HCT116 (cell line): ENCODE measurements at regions of chr9 and their contacts with region 1.

Region 1: GRCh38 chr9:96232539-96233241 is 69.3 kb downstream of the HSD17B3 start:
- DNase-seq: no peak
- ATAC-seq: peak; percentile 97
- H3K4me3 ChIP-seq: no peak overlapping the region
- H3K27ac ChIP-seq: no peak overlapping the region
- H3K4me1 ChIP-seq: no peaks in the 10 kb centered on the region
- H3K27me3 ChIP-seq: 0 out of 2 replicates have a peak, but pooled peaks cover 4% of the 10 kb centered on the region
- CTCF ChIP-seq: peak; percentile 79 to 95 (median 93)
- POLR2A ChIP-seq: no peak
- RAD21 ChIP-seq: peak; percentile 85

Region 2: DNA sequence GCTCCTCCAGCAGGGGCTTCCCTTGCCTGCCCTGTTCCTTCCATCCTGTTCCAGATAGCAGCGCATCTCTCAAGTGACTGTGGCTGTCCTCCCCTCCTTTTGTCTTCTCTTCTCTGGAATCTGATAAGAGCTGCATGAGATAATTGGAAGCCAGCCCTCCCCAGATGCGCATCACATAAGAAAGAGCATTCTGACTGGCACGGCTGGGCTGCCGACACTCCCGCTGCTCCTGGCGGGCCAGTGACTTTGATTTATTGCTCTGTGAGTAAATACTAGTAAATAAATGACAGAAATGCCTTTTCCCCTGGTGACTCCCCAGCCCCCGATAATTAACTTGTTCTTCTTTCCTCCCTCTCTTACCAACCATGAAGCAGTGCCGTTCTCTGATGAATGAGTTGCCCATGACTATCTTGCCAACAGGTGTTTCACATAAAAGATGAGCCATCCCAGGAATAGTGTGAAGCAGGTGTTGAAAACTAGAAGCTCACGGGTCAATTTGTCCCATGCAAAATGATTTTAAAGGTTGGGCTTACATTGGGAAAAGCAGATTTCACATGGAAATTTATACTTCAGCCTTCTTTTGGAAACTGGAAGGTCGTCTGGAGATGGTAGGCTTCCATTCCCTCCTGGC is 144.9 kb before region 1 on chr9:
- CTCF ChIA-PET with region 1: no interaction called
- POLR2A ChIA-PET with region 1: no interaction called
- RAD21 ChIA-PET with region 1: no interaction called
- intact Hi-C with region 1: no loop called
- DNase-seq: no peak
- ATAC-seq: no peak
- H3K4me3 ChIP-seq: no peak overlapping the region
- H3K27ac ChIP-seq: no peak overlapping the region
- H3K4me1 ChIP-seq: peaks cover 7 to 10% of the 10 kb centered on the region in 2 experiments
- H3K27me3 ChIP-seq: no peaks in the 10 kb centered on the region; the same call in 1 of the 2 replicates
- CTCF ChIP-seq: no peak
- POLR2A ChIP-seq: no peak
- RAD21 ChIP-seq: no peak

Region 3: DNA sequence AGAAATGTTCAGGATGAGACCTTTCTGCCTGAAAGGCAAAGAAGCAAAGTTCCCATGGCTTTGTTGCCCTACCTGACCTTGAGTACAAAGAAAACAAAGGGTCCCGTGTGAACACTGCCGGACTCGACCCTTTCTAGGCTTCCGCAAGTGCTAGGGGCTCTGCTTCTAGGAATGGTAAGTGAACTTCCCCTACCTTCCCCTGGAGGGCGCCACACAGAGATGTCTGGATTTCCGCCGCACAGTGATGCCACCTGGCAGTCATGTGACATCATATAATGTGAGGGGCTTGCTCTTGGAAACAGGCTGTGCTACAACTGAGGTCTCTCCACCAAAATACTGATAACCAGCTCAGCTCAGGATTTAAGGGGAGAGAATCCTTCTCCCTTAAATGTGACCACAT is 12.7 kb after region 1 on chr9:
- CTCF ChIA-PET with region 1: interaction called, 13 read pairs
- POLR2A ChIA-PET with region 1: no interaction called
- RAD21 ChIA-PET with region 1: no interaction called
- intact Hi-C with region 1: no loop called
- DNase-seq: no peak
- ATAC-seq: peak; percentile 39
- H3K4me3 ChIP-seq: no peak overlapping the region
- H3K27ac ChIP-seq: no peak overlapping the region
- H3K4me1 ChIP-seq: peaks cover 17 to 25% of the 10 kb centered on the region in 2 experiments
- H3K27me3 ChIP-seq: no peaks in the 10 kb centered on the region
- CTCF ChIP-seq: peak; percentile 24 to 71 (median 71); a peak in 5 of 6 replicates
- POLR2A ChIP-seq: no peak
- RAD21 ChIP-seq: peak; percentile 31

Region 4: DNA sequence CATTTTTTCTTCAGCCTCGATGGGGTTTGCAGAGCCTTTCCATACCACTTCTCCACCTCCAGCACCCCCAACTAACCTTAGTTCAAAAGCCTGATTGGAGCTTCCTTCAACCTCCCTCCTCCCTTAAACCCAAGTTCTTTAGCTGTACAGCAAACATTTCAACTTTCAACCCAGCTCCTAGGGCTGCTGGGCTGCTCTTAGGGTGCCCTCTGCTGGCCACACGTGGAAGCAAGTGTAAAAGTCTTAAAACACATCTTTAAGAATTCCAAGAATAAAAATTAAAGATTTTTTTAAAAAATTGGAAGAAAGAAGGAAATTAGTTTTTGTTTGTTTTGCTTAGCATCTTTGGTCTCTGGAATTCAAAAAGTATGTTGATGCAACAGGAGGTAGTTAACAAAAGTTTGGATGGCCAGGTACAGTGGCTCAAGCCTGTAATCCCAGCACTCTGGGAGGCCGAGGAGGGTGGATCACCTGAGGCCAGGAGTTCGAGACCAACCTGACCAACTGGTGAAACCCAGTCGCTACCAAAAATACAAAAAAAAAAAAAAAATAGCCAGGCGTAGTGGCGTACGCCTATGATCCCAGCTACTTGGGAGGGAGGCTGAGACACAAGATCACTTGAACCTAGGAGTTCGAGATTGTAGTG is 84.8 kb after region 1 on chr9:
- CTCF ChIA-PET with region 1: interaction called, 15 read pairs
- POLR2A ChIA-PET with region 1: no interaction called
- RAD21 ChIA-PET with region 1: no interaction called
- intact Hi-C with region 1: loop called (anchors 1 kb)
- DNase-seq: peak; percentile 41
- ATAC-seq: peak; percentile 86
- H3K4me3 ChIP-seq: no peak overlapping the region
- H3K27ac ChIP-seq: no peak overlapping the region
- H3K4me1 ChIP-seq: no peaks in the 10 kb centered on the region
- H3K27me3 ChIP-seq: no peaks in the 10 kb centered on the region
- CTCF ChIP-seq: peak; percentile 90 to 95 (median 92)
- POLR2A ChIP-seq: no peak
- RAD21 ChIP-seq: peak; percentile 96

Region 5: DNA sequence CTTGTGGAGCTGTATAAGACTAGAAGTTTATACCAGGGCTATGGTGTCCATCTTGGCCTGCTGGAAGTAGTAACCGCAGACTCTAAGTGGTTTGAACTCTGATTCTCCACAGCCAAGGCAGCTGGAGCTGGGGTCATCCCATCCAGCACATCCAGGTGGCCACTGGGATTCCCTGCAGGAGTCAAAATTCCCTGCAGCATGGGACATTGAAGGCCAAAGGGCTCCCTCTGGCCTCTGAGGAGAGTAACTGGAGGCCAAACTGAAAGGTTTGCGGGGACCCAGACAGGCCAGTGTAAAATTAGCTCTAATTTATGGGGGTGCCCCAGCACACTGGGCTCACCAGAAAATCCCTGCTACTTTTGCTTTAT is 434.7 kb after region 1 on chr9:
- CTCF ChIA-PET with region 1: interaction called, 3 read pairs
- POLR2A ChIA-PET with region 1: no interaction called
- RAD21 ChIA-PET with region 1: interaction called in 1 of 2 experiments, 4 read pairs
- intact Hi-C with region 1: loop called (anchors 1 kb)
- DNase-seq: no peak
- ATAC-seq: peak; percentile 39
- H3K4me3 ChIP-seq: no peak overlapping the region
- H3K27ac ChIP-seq: no peak overlapping the region
- H3K4me1 ChIP-seq: peaks cover 0 to 3% of the 10 kb centered on the region in 2 experiments; a peak in 2 of 4 replicates
- H3K27me3 ChIP-seq: no peaks in the 10 kb centered on the region
- CTCF ChIP-seq: no peak
- POLR2A ChIP-seq: no peak
- RAD21 ChIP-seq: 0 out of 2 replicates have a peak, but pooled peaks have one; percentile 6